ENCODE measurements at regions of chr1 and their contacts with region 1.

Region 1: GRCh38 chr1:205658943-205659581 is 21.2 kb downstream of the SLC45A3 start:
- DNase-seq: peak; percentile 48 to 78 (median 59)
- H3K4me3 ChIP-seq: no peak overlapping the region
- H3K4me3 Mint-ChIP-seq: peak overlapping the region in 1 of 7 donors; percentile 8
- H3K27ac ChIP-seq: no peak overlapping the region
- H3K27ac Mint-ChIP-seq: no peak overlapping the region
- H3K4me1 ChIP-seq: no peaks in the 10 kb centered on the region
- H3K4me1 Mint-ChIP-seq: no peaks in the 10 kb centered on the region
- H3K27me3 ChIP-seq: no peaks in the 10 kb centered on the region
- H3K27me3 Mint-ChIP-seq: peaks cover 17 to 27% of the 10 kb centered on the region in 2 donors

Region 2: GRCh38 chr1:205591522-205592351 is 67.3 kb before region 1 on chr1:
- CTCF ChIA-PET with region 1: interaction called, 349 read pairs
- POLR2A ChIA-PET with region 1: interaction called, 9 read pairs
- DNase-seq: peak; percentile 82 to 91 (median 85)
- H3K4me3 ChIP-seq: peak overlapping the region; percentile 68
- H3K4me3 Mint-ChIP-seq: peak overlapping the region; percentile 86 to 94 (median 89)
- H3K27ac ChIP-seq: peak overlapping the region; percentile 26
- H3K27ac Mint-ChIP-seq: peak overlapping the region; percentile 33 to 93 (median 90)
- H3K4me1 ChIP-seq: peaks cover 37% of the 10 kb centered on the region
- H3K4me1 Mint-ChIP-seq: peaks cover 17 to 30% (median 29%) of the 10 kb centered on the region in 3 donors
- H3K27me3 ChIP-seq: no peaks in the 10 kb centered on the region
- H3K27me3 Mint-ChIP-seq: no peaks in the 10 kb centered on the region

Region 3: DNA sequence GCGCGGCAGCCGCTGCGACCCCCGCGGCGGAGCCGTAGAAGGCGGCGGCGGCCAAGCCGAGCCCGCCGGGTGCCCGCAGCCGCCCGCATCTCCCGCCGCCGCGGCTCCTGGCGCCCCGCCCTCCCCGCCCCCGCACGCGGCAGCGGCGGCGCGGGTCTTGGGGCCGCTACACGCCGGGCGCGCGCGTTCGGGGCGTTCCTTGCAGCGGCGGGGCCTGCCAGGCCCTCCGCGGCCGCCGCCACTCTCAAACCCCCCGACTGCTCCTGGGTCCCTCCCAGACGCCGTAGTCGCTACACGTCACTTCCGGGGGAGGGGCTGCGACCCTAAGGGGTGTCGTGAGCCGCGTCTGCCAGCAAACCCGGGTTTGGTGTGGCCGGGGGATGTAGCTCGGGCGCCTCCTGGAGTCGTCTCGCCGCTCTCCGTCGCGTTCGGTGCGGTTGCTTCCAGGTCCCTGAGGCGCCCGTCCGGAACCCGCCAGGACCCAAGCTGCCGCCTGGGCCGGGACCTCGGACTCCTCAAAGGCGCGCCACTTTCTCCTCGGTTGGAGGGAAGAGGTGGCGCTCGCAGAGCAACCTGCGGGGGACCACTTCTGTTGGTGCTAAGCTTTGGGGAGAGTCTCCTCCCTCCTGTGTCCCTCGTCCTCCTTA is 27.2 kb before region 1 on chr1 and contains the start of gene ELK4:
- CTCF ChIA-PET with region 1: interaction called, 46 read pairs
- POLR2A ChIA-PET with region 1: interaction called, 10 read pairs
- DNase-seq: peak; percentile 99 to 100 (median 99)
- H3K4me3 ChIP-seq: peak within 1 kb of the TSS; percentile 80
- H3K4me3 Mint-ChIP-seq: peak within 1 kb of the TSS; percentile 88 to 95 (median 91)
- H3K27ac ChIP-seq: peak within 1 kb of the TSS; percentile 89
- H3K27ac Mint-ChIP-seq: peak within 1 kb of the TSS; percentile 90 to 99 (median 98)
- H3K4me1 ChIP-seq: peaks cover 41% of the 10 kb centered on the region
- H3K4me1 Mint-ChIP-seq: peaks cover 39 to 53% (median 46%) of the 10 kb centered on the region in 3 donors
- H3K27me3 ChIP-seq: no peaks in the 10 kb centered on the region
- H3K27me3 Mint-ChIP-seq: peaks cover 0 to 1% of the 10 kb centered on the region in 2 donors
- total RNA-seq, gene ELK4: 83.3 to 88.7 TPM

Region 4: GRCh38 chr1:205680073-205680851 is 21.2 kb after region 1 on chr1 and contains the start of gene SLC45A3:
- CTCF ChIA-PET with region 1: interaction called, 30 read pairs
- POLR2A ChIA-PET with region 1: no interaction called
- DNase-seq: peak in 3 of 5 donors; percentile 9 to 32 (median 18)
- H3K4me3 ChIP-seq: peak within 1 kb of the TSS; percentile 53
- H3K4me3 Mint-ChIP-seq: peak within 1 kb of the TSS; percentile 75 to 91 (median 81)
- H3K27ac ChIP-seq: peak within 1 kb of the TSS; percentile 72
- H3K27ac Mint-ChIP-seq: peak within 1 kb of the TSS in 1 of 8 donors; percentile 30
- H3K4me1 ChIP-seq: peaks cover 9% of the 10 kb centered on the region
- H3K4me1 Mint-ChIP-seq: peaks cover 11 to 17% (median 15%) of the 10 kb centered on the region in 3 donors
- H3K27me3 ChIP-seq: no peaks in the 10 kb centered on the region
- H3K27me3 Mint-ChIP-seq: peaks cover 11 to 24% of the 10 kb centered on the region in 2 donors
- total RNA-seq, gene SLC45A3: 0.29 to 0.33 TPM

Region 5: DNA sequence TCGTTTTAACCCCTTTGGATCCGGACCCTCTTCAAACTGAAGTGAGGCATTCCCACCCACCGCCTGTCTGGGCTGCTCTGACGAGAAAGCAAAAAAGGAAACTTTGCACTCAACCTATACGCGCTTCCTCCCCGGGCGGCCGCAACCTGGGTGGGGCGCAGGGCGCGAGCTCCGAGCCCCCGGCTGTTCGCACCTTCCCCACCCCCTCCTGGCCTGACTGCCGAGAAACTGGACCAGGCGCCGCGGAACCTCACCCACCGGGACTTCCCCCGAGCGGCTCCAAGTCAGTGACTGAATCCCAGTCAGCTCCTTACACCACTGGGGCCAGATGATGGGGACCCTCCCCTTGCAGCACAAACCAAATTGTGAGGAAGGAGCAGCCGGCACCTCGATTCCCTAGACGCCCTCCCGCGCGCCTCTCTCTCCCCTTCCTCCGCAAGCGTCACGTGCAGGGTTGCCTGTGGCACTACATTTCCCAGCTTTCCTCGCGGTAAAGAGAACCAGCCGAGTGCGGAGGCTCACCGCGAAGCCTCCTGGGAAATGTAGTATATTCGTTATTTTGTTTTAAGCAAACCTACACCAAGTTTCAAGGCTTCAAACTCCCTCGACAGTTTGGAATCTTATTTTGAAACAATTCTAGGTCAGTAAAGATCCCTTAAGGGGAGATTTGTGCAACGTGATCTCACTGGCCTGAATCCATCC is 116.1 kb after region 1 on chr1 and contains the start of gene RAB29:
- CTCF ChIA-PET with region 1: interaction called, 15 read pairs
- POLR2A ChIA-PET with region 1: no interaction called
- DNase-seq: peak; percentile 80 to 92 (median 89)
- H3K4me3 ChIP-seq: peak within 1 kb of the TSS; percentile 84
- H3K4me3 Mint-ChIP-seq: peak within 1 kb of the TSS; percentile 89 to 99 (median 97)
- H3K27ac ChIP-seq: peak within 1 kb of the TSS; percentile 90
- H3K27ac Mint-ChIP-seq: peak within 1 kb of the TSS; percentile 95 to 100 (median 99)
- H3K4me1 ChIP-seq: peaks cover 41% of the 10 kb centered on the region
- H3K4me1 Mint-ChIP-seq: peaks cover 57 to 64% (median 62%) of the 10 kb centered on the region in 3 donors
- H3K27me3 ChIP-seq: no peaks in the 10 kb centered on the region
- H3K27me3 Mint-ChIP-seq: peaks cover 0 to 2% of the 10 kb centered on the region in 2 donors
- total RNA-seq, gene RAB29: 37.1 to 39.7 TPM

Region 6: GRCh38 chr1:205791568-205792180 is 132.6 kb after region 1 on chr1:
- CTCF ChIA-PET with region 1: interaction called, 11 read pairs
- POLR2A ChIA-PET with region 1: no interaction called
- DNase-seq: peak; percentile 38 to 72 (median 41)
- H3K4me3 ChIP-seq: no peak overlapping the region
- H3K4me3 Mint-ChIP-seq: no peak overlapping the region
- H3K27ac ChIP-seq: no peak overlapping the region
- H3K27ac Mint-ChIP-seq: peak overlapping the region in 2 of 8 donors; percentile 58 to 70
- H3K4me1 ChIP-seq: no peaks in the 10 kb centered on the region
- H3K4me1 Mint-ChIP-seq: no peaks in the 10 kb centered on the region
- H3K27me3 ChIP-seq: no peaks in the 10 kb centered on the region
- H3K27me3 Mint-ChIP-seq: no peaks in the 10 kb centered on the region

Region 7: GRCh38 chr1:206001476-206001888 is 342.4 kb after region 1 on chr1:
- CTCF ChIA-PET with region 1: no interaction called
- POLR2A ChIA-PET with region 1: no interaction called
- DNase-seq: no peak
- H3K4me3 ChIP-seq: no peak overlapping the region
- H3K4me3 Mint-ChIP-seq: no peak overlapping the region
- H3K27ac ChIP-seq: no peak overlapping the region
- H3K27ac Mint-ChIP-seq: no peak overlapping the region
- H3K4me1 ChIP-seq: no peaks in the 10 kb centered on the region
- H3K4me1 Mint-ChIP-seq: no peaks in the 10 kb centered on the region
- H3K27me3 ChIP-seq: no peaks in the 10 kb centered on the region
- H3K27me3 Mint-ChIP-seq: peaks cover 10 to 20% of the 10 kb centered on the region in 2 donors

Measured in CD8-positive, alpha-beta memory T cell (primary cell).